Left ventricle myocardium inferior (tissue), 1 donor: ENCODE measurements at regions of chr12 and their contacts with region 1.

Region 1: DNA sequence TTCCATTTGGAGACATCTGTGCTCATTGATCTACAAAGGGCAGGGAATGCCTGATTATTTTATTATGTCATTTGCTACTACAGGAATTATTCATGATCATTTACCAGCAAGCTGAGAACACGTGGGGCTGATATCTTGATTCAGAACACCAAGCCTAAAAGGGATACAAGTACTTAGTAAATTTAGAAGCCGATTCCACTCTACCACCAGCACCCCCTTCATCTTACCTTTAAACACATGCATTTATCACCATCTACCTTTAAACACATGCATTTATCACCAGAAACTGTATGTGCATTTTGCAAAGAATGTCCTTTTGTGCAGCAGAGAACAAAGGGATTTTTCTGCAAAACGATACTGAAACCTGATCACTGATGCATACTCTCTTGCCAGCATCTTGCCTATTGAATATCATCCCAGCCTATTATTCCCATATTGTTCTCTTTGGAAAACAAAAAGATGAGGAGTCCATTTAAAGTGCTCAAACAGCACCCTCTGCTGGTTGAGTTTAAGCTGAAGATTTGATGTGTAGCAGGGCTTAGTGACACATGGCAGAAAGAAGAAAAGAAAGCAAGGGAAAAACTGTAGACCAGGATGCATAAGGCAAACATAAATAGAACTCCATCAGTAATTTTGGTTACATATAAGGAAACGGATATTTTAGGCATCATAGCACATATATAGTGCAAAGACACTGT is 132.6 kb upstream of the PLEKHG7 start:
- DNase-seq: no peak
- H3K4me3 ChIP-seq: no peak overlapping the region
- H3K27ac ChIP-seq: peak overlapping the region; percentile 30
- H3K4me1 ChIP-seq: peaks cover 20% of the 10 kb centered on the region
- H3K27me3 ChIP-seq: no peaks in the 10 kb centered on the region
- CTCF ChIP-seq: peak; percentile 86

Region 2: DNA sequence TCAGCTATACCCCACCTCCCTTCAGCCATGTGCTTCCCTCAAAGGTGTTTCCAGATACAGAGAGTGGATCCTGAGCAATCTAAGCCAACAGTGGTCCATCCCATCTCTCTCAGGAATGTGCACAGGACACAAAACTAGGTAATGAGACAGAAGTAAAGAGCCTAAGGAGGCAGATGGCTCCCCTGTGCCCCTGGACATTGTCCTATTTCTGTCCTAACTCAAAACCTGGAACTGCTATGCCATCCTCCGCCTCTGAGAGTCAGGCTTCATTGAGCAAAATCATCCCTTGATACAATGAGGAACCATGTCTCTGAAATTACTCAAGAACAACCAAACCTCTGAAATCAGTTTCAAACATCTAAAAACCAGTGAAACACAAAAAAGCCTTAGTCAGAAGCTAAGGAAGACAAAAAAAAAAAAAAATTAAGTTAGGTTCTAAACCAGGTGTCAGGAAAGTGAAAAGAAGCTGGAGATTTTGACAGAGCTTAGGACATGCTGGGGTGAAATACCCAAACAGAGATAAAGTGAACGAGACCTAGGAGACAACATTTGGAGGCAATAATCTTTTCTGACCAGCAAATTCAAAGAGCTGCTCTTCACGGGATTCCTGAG is 67.7 kb before region 1 on chr12:
- intact Hi-C with region 1: loop called (anchors 5 kb)
- DNase-seq: no peak
- H3K4me3 ChIP-seq: no peak overlapping the region
- H3K27ac ChIP-seq: peak overlapping the region; percentile 88
- H3K4me1 ChIP-seq: peaks cover 49% of the 10 kb centered on the region
- H3K27me3 ChIP-seq: no peaks in the 10 kb centered on the region
- CTCF ChIP-seq: peak; percentile 52